H1 (cell line): ENCODE measurements at regions of chr2 and their contacts with region 1.

Region 1: GRCh38 chr2:143259368-143259958 is 130.2 kb downstream of the ARHGAP15 start:
- DNase-seq: peak; percentile 39 to 61
- H3K4me3 ChIP-seq: no peak overlapping the region
- H3K27ac ChIP-seq: no peak overlapping the region
- H3K4me1 ChIP-seq: peaks cover 0 to 4% (median 0%) of the 10 kb centered on the region in 4 experiments; a peak in 1 of 7 replicates
- H3K27me3 ChIP-seq: peaks cover 0 to 1% (median 0%) of the 10 kb centered on the region in 4 experiments; a peak in 1 of 7 replicates
- CTCF ChIP-seq: peak in 2 of 3 experiments; percentile 65 to 76; a peak in 3 of 4 replicates
- EP300 ChIP-seq: no peak
- POLR2A ChIP-seq: no peak
- RAD21 ChIP-seq: peak; percentile 83 to 88

Region 2: DNA sequence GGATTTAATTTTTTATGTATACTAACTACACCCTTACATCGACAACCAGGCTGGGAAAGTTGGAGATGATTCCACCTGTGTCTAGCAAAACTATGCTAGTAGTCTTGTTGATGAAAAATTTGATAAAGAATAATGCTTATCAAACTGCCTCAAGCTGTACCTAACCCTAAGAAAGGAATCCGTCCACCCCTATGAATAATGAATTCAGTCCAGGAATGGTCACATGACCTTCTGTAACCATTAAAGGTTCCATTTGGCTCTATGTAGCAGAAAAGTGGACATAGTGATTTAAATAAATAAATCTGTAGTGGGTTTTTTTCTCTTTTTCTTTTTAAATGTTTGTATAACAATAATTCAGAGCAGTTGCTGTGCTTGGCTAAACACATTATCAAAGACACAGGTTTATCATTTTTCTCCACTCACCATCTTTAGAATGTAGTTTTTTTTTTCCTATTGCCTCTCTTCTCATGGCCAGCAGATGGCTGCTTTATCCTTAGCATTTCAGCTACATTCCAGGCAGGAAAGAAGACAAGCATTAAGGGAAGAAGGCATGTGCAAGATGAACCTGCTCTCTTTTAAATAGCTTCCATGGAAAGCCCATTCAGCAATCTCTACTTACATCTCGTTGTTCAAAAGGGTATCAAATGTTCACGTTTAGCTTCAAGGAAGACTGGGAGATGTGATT is 87.8 kb before region 1 on chr2:
- CTCF ChIA-PET with region 1: interaction called, 61 read pairs
- POLR2A ChIA-PET with region 1: interaction called, 3 read pairs
- DNase-seq: no peak
- H3K4me3 ChIP-seq: no peak overlapping the region
- H3K27ac ChIP-seq: no peak overlapping the region
- H3K4me1 ChIP-seq: no peaks in the 10 kb centered on the region
- H3K27me3 ChIP-seq: no peaks in the 10 kb centered on the region
- CTCF ChIP-seq: peak in 2 of 3 experiments; percentile 49 to 56; a peak in 2 of 4 replicates
- EP300 ChIP-seq: no peak
- POLR2A ChIP-seq: no peak
- RAD21 ChIP-seq: peak; percentile 63 to 69

Region 3: DNA sequence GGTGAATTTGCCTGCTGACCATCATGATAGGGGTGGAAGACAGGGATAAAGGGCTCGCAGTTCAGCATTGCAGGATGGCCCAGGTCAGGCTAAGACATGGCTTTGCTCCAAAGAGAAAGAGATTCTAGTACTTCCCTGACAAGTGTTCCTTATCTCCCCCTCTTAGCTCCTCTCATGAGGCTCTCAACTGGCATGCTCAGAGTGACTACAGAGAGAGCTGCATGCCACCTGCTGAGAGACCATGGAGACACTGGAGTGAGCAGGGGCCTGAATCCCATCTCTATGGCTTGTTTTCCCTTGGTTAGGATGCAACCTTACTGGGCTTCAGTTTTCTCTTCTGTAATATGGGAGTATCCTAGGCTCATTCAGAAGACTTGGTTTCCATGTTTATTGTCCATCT is 35.9 kb before region 1 on chr2:
- CTCF ChIA-PET with region 1: interaction called, 16 read pairs
- POLR2A ChIA-PET with region 1: no interaction called
- DNase-seq: no peak
- H3K4me3 ChIP-seq: no peak overlapping the region
- H3K27ac ChIP-seq: no peak overlapping the region
- H3K4me1 ChIP-seq: no peaks in the 10 kb centered on the region
- H3K27me3 ChIP-seq: no peaks in the 10 kb centered on the region
- CTCF ChIP-seq: no peak
- EP300 ChIP-seq: no peak
- POLR2A ChIP-seq: no peak
- RAD21 ChIP-seq: no peak

Region 4: DNA sequence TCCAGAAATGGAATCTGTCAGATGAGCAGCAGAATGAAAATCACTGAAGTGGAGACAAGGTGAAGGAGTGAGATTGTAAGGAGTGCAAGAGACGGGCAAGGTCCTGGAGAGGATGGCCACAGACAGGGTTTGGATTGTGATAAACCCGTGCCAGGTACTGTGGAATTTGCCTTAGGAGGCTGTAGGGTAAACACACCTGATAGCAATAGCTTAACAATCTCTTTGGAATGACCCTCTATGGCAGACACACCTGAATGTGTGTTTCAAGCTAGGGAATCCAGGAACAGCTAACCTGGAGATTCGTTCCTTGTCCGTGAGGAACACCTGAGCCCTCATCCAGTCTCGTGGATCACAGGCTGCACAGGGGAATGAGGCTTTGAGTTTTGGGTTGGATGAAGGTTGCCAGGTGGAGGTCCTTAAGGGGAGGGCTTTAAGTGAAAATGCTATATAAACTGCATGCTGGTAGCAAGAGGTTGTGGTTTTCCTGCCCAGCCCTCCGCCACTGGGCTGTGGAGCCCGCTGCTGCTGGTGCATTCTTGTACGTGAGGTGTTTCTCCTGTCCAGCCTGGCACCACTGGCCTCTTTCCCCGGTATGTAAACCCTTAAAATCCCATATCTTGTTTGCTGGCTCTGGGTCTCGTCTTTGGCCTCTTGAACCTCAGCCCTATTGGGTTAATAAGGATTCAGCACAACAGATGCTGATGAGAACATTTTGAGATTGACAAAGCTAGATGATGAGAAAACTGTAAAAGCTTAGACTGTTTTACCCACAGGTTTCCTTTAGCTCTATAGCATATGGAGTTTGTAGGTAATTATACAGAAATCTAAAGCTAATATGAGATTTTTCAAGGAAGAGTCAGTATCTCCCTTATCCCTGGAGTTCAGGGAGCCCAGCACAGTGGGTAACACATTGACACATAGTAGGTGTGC is 12.4 kb before region 1 on chr2:
- CTCF ChIA-PET with region 1: interaction called, 32 read pairs
- POLR2A ChIA-PET with region 1: no interaction called
- DNase-seq: no peak
- H3K4me3 ChIP-seq: no peak overlapping the region
- H3K27ac ChIP-seq: no peak overlapping the region
- H3K4me1 ChIP-seq: peaks cover 0 to 2% (median under 1%) of the 10 kb centered on the region in 4 experiments; a peak in 3 of 7 replicates
- H3K27me3 ChIP-seq: no peaks in the 10 kb centered on the region
- CTCF ChIP-seq: no peak
- EP300 ChIP-seq: no peak
- POLR2A ChIP-seq: no peak
- RAD21 ChIP-seq: no peak

Region 5: DNA sequence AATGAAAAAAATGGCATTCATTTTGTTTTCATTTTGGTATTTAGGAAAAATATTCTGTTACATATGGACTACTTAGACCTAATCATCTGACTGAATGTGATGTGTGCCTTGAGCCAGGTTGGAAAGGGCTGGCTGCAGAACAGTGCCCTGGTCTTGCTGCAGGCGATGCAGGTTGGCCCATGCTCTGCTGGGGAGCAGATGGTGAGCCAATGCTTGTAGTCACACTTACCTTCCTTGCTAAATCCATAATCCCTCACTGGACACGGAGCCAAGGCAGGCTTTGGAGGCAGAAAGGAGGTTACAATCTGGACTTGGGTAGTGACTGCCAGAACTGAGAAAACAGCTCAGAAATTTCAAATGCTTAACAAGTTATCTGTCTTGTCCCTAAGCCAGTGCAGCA is 98.5 kb after region 1 on chr2:
- CTCF ChIA-PET with region 1: no interaction called
- POLR2A ChIA-PET with region 1: no interaction called
- DNase-seq: no peak
- H3K4me3 ChIP-seq: no peak overlapping the region
- H3K27ac ChIP-seq: no peak overlapping the region
- H3K4me1 ChIP-seq: no peaks in the 10 kb centered on the region
- H3K27me3 ChIP-seq: no peaks in the 10 kb centered on the region
- CTCF ChIP-seq: no peak
- EP300 ChIP-seq: no peak
- POLR2A ChIP-seq: no peak
- RAD21 ChIP-seq: no peak